ENCODE measurements at regions of chr1 and their contacts with region 1.

Region 1: GRCh38 chr1:2525920-2526823 is at the start of gene PANK4:
- DNase-seq: peak; percentile 86
- H3K4me3 Mint-ChIP-seq: peak within 1 kb of the TSS; percentile 94
- H3K27ac Mint-ChIP-seq: peak within 1 kb of the TSS; percentile 98
- H3K4me1 Mint-ChIP-seq: peaks cover 38% of the 10 kb centered on the region
- H3K27me3 Mint-ChIP-seq: peaks cover 15% of the 10 kb centered on the region
- total RNA-seq, gene PANK4: 65.6 and 67.6 TPM in 2 replicates

Region 2: GRCh38 chr1:2133039-2133878 is 392.9 kb before region 1 on chr1:
- intact Hi-C with region 1: loop called (anchors 10 kb)
- DNase-seq: peak; percentile 95
- H3K4me3 Mint-ChIP-seq: peak overlapping the region; percentile 73
- H3K27ac Mint-ChIP-seq: peak overlapping the region; percentile 48
- H3K4me1 Mint-ChIP-seq: peaks cover 6% of the 10 kb centered on the region
- H3K27me3 Mint-ChIP-seq: peaks cover 8% of the 10 kb centered on the region

Region 3: GRCh38 chr1:2233997-2234761 is 292.0 kb before region 1 on chr1:
- intact Hi-C with region 1: loop called (anchors 10 kb)
- DNase-seq: peak; percentile 68
- H3K4me3 Mint-ChIP-seq: peak overlapping the region; percentile 93
- H3K27ac Mint-ChIP-seq: peak overlapping the region; percentile 78
- H3K4me1 Mint-ChIP-seq: peaks cover 71% of the 10 kb centered on the region
- H3K27me3 Mint-ChIP-seq: no peaks in the 10 kb centered on the region

Region 4: GRCh38 chr1:2391041-2391930 is 134.9 kb before region 1 on chr1 and contains the starts of genes MORN1 and RER1:
- intact Hi-C with region 1: loop called (anchors 1 kb)
- DNase-seq: peak; percentile 99
- H3K4me3 Mint-ChIP-seq: peak within 1 kb of the TSS; percentile 88
- H3K27ac Mint-ChIP-seq: peak within 1 kb of the TSS; percentile 82
- H3K4me1 Mint-ChIP-seq: peaks cover 28% of the 10 kb centered on the region
- H3K27me3 Mint-ChIP-seq: no peaks in the 10 kb centered on the region
- total RNA-seq, gene MORN1: 8.4 and 8.6 TPM in 2 replicates
- total RNA-seq, gene RER1: 161 and 177 TPM in 2 replicates

Region 5: DNA sequence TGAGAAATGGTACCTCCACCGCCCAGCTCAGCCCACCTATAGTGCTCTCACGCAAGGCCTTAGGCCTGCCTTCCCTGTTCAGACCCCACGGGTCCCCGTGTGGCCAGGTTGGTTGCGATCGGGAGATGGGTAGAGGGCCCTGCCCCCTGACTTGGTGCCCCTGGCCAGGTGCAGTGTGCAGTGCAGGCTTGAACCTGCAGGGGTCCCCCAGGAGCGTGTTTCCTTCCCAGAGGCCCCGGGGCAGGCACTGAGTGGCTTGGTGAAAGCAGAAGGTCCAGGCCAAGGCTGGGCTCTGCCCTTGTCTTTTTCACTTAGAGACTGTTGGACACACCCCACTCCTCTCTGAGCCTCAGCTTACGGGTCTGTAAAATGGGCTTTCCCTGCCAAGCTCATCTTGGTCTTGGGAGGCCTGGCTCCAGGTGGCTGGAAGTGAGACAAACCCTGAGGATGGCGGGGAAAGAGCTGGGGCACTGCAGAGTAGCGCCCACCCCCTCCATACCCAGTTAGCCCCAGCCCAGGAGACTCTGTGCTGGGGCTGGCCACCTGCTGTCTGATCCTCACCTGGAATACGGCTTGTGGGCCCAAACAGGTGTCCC is 13.2 kb after region 1 on chr1:
- intact Hi-C with region 1: no loop called
- DNase-seq: no peak
- H3K4me3 Mint-ChIP-seq: no peak overlapping the region
- H3K27ac Mint-ChIP-seq: no peak overlapping the region
- H3K4me1 Mint-ChIP-seq: no peaks in the 10 kb centered on the region
- H3K27me3 Mint-ChIP-seq: peaks cover 15% of the 10 kb centered on the region

Region 6: GRCh38 chr1:2556277-2556677 is 30.1 kb after region 1 on chr1 and contains the start of gene TNFRSF14:
- intact Hi-C with region 1: loop called (anchors 1 kb)
- DNase-seq: peak; percentile 73
- H3K4me3 Mint-ChIP-seq: peak within 1 kb of the TSS; percentile 88
- H3K27ac Mint-ChIP-seq: peak within 1 kb of the TSS; percentile 86
- H3K4me1 Mint-ChIP-seq: peaks cover 21% of the 10 kb centered on the region
- H3K27me3 Mint-ChIP-seq: no peaks in the 10 kb centered on the region
- total RNA-seq, gene TNFRSF14: 207 and 215 TPM in 2 replicates

Region 7: DNA sequence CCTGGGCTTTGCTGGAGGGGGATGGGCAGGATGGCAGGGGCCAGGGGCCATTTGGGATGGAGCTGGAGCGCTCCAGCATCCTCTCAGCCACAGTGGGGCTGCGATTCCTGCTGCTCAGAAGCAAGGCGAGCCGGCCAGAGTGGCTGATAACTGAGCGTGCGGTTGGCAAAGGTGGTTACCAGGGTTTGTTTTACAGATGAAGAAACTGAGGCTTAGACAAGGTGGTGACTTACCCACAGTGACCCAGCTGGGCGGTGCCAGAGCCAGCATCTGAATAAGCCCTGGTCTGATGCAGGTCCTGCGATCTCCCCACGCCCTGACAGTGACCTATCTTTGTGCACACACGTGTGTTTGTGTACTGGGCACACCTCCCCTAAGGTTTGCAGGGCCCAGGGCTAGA is 54.5 kb after region 1 on chr1:
- intact Hi-C with region 1: no loop called
- DNase-seq: no peak
- H3K4me3 Mint-ChIP-seq: no peak overlapping the region
- H3K27ac Mint-ChIP-seq: peak overlapping the region; percentile 72
- H3K4me1 Mint-ChIP-seq: peaks cover 84% of the 10 kb centered on the region
- H3K27me3 Mint-ChIP-seq: no peaks in the 10 kb centered on the region

Region 8: GRCh38 chr1:2650967-2651645 is 124.9 kb after region 1 on chr1:
- intact Hi-C with region 1: no loop called
- DNase-seq: no peak
- H3K4me3 Mint-ChIP-seq: no peak overlapping the region
- H3K27ac Mint-ChIP-seq: no peak overlapping the region
- H3K4me1 Mint-ChIP-seq: no peaks in the 10 kb centered on the region
- H3K27me3 Mint-ChIP-seq: peaks cover 2% of the 10 kb centered on the region